Activated CD8-positive, alpha-beta T cell treated with anti-CD3 and anti-CD28 coated beads, Interleukin-2, amount 10 ng/mL, durations not matched to agents 7 days and 5 days (primary cell): ENCODE measurements at regions of chr2 and their contacts with region 1.

Region 1: GRCh38 chr2:73896362-73897239 is 3.8 kb downstream of the ACTG2 start:
- DNase-seq: peak; percentile 81
- ATAC-seq: peak; percentile 90
- H3K4me3 Mint-ChIP-seq: peak overlapping the region; percentile 67
- H3K27ac Mint-ChIP-seq: peak overlapping the region; percentile 99
- H3K4me1 Mint-ChIP-seq: peaks cover 47% of the 10 kb centered on the region
- H3K27me3 Mint-ChIP-seq: no peaks in the 10 kb centered on the region

Region 2: GRCh38 chr2:73862987-73863386 is 33.6 kb before region 1 on chr2:
- CTCF ChIA-PET with region 1: no interaction called
- POLR2A ChIA-PET with region 1: no interaction called
- DNase-seq: no peak
- ATAC-seq: no peak
- H3K4me3 Mint-ChIP-seq: no peak overlapping the region
- H3K27ac Mint-ChIP-seq: no peak overlapping the region
- H3K4me1 Mint-ChIP-seq: peaks cover 3% of the 10 kb centered on the region
- H3K27me3 Mint-ChIP-seq: no peaks in the 10 kb centered on the region

Region 3: DNA sequence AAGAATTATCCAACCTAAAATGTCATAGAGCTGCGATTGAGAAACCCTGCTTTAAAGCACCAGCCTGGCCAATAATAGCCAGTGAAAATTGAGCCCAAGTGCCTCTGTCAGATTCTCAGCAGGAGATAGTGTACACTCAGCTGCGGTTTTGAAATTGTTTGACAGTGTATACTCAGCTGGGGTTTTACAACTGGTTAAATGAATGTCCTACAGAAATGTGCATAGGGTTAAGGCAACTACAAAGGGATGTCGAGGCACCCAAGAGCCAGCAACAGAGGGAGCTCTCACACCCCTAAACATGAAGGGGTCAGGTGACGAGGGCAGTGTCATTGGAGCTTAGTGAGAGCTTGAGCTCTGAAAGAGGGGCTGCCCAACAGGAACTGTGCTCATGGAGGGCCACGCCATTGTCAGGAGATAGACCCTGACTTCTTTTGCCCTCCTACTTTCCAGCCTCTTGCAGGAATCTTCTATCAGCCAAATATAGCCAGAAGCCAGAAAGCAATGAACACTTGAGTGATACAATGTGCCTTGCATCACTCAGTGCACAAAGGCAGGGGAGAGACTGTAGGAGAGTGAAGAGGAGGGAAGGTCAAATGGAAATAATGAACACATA is 11.3 kb after region 1 on chr2:
- CTCF ChIA-PET with region 1: interaction called, 12 read pairs
- POLR2A ChIA-PET with region 1: interaction called, 5 read pairs
- DNase-seq: peak; percentile 73
- ATAC-seq: peak; percentile 94
- H3K4me3 Mint-ChIP-seq: no peak overlapping the region
- H3K27ac Mint-ChIP-seq: peak overlapping the region; percentile 45
- H3K4me1 Mint-ChIP-seq: peaks cover 8% of the 10 kb centered on the region
- H3K27me3 Mint-ChIP-seq: no peaks in the 10 kb centered on the region